Lower leg skin (tissue), 4 donors: ENCODE measurements at regions of chr19 and their contacts with region 1.

Region 1: DNA sequence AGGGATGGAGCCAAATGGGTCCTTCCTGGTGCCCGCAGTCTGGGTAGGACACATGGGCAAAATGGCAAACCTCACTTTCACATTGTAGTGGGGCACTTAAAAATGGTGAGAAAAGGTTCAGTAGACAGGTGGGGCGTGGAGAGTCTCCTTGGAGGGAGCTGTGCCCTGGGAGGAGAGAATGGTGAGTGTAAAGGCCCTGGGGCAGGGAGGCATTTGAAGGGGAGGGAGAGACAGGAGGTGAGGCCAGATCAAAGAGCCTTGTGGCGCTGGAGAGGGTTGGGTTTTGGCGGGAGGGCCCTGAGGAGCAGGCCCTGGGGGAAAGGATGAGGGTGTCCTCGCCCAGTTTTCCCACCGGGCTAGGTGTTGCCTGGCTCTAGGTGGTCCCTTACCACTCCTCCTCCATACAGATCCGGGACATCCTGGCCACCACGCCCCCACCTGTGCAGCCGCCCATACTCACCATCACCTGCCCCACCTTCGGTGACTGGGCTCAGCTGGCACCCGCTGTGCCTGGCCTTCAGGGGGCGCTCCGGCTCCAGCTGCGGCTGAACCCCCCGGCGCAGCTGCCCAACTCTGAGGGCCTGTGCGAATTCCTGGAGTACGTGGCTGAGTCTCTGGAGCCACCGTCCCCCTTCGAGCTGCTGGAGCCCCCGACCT is 6.3 kb downstream of the MAP1S start:
- DNase-seq: no peak
- H3K4me3 ChIP-seq: no peak overlapping the region
- CTCF ChIP-seq: no peak
- POLR2A ChIP-seq: no peak

Region 2: DNA sequence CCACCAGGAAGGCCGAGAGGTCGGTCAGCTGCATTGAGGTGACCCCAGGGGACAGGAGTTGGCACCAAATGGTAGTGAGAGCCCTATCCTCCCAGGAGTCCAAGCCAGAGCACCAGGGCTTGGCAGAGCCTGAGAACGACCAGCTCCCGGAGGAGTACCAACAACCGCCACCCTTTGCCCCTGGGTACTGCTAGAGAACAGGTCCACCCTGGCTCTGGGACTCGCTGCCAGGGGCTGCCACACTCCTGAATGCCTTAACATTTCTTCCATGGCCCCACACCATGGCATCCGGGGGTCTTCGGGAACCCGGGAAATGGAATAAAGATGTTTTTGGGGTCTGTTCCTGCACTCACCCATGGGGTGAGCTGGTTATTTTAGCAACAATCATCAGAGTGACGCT is 1567.9 kb before region 1 on chr19:
- intact Hi-C with region 1: loop called (anchors 5 kb)
- DNase-seq: no peak
- H3K4me3 ChIP-seq: no peak overlapping the region
- CTCF ChIP-seq: no peak
- POLR2A ChIP-seq: no peak